Activated B cell treated with CpG ODN at 0.5 μM for 24 hours (primary cell): ENCODE measurements at regions of chrX and their contacts with region 1.

Region 1: DNA sequence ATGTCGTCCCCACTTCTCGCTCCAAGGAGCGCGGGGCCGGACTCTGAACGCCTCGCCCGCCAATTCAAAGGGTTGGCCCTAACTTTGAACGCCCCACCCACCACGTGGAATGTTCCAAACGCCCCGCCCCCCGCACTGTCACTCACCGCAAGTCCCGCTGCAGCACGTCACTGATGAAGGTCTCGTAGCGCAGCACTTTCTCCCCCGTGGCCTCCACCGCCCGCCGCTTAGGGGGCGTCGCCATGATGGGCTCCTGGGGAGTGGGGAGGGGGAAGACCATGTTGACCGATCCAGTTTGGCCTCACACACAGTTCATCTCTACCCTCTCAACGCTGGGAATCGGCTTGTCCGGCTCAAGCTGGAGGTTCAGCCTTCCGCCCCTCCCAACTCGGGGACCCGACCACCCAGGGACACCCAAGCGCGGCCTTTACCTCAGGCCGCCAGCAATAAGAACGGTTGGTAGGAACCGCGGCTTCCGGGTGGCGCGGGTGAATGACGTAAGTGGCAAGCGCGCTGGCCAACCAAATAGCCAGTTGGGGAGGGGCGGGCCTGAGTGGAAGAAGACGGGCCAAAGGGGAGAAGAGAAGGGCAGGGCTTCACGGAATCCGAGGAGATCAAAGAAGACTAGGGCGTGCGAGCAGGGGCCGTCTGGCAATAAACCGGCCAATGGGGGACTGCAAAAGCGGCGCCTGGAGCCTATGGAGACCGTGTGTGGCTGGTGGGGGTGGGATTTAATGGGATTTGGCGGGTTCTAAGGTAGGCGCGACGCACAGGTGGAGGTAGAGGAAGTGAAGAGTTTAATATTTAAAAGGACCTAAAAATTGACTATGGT is at the start of gene UXT:
- DNase-seq: peak; percentile 82
- ATAC-seq: peak; percentile 85
- H3K4me3 Mint-ChIP-seq: peak within 1 kb of the TSS; percentile 91
- H3K27ac Mint-ChIP-seq: peak within 1 kb of the TSS; percentile 99
- H3K4me1 Mint-ChIP-seq: peaks cover 18% of the 10 kb centered on the region
- H3K27me3 Mint-ChIP-seq: no peaks in the 10 kb centered on the region
- CTCF ChIP-seq: no peak
- total RNA-seq, gene UXT: 184 and 201 TPM in 2 replicates

Region 2: GRCh38 chrX:46446727-46447378 is 1212.0 kb before region 1 on chrX:
- CTCF ChIA-PET with region 1: no interaction called
- POLR2A ChIA-PET with region 1: no interaction called
- intact Hi-C with region 1: loop called (anchors 5 kb)
- DNase-seq: peak; percentile 81
- ATAC-seq: peak; percentile 98
- H3K4me3 Mint-ChIP-seq: peak overlapping the region; percentile 85
- H3K27ac Mint-ChIP-seq: peak overlapping the region; percentile 85
- H3K4me1 Mint-ChIP-seq: peaks cover 11% of the 10 kb centered on the region
- H3K27me3 Mint-ChIP-seq: no peaks in the 10 kb centered on the region
- CTCF ChIP-seq: no peak

Region 3: GRCh38 chrX:47619486-47620302 is 39.2 kb before region 1 on chrX and contains the start of gene SYN1:
- CTCF ChIA-PET with region 1: no interaction called
- POLR2A ChIA-PET with region 1: no interaction called
- intact Hi-C with region 1: loop called (anchors 2 kb)
- DNase-seq: peak; percentile 62
- ATAC-seq: peak; percentile 93
- H3K4me3 Mint-ChIP-seq: peak within 1 kb of the TSS; percentile 53
- H3K27ac Mint-ChIP-seq: no peak within 1 kb of the TSS
- H3K4me1 Mint-ChIP-seq: peaks cover 16% of the 10 kb centered on the region
- H3K27me3 Mint-ChIP-seq: peaks cover 45% of the 10 kb centered on the region
- CTCF ChIP-seq: no peak
- total RNA-seq, gene SYN1: not detected in 2 replicates

Region 4: GRCh38 chrX:47697191-47697590 is 38.3 kb after region 1 on chrX:
- CTCF ChIA-PET with region 1: no interaction called
- POLR2A ChIA-PET with region 1: no interaction called
- intact Hi-C with region 1: no loop called
- DNase-seq: no peak
- ATAC-seq: no peak
- H3K4me3 Mint-ChIP-seq: no peak overlapping the region
- H3K27ac Mint-ChIP-seq: no peak overlapping the region
- H3K4me1 Mint-ChIP-seq: no peaks in the 10 kb centered on the region
- H3K27me3 Mint-ChIP-seq: peaks cover 6% of the 10 kb centered on the region
- CTCF ChIP-seq: no peak

Region 5: GRCh38 chrX:48508400-48509244 is 849.7 kb after region 1 on chrX and contains the start of gene PORCN:
- CTCF ChIA-PET with region 1: no interaction called
- POLR2A ChIA-PET with region 1: no interaction called
- intact Hi-C with region 1: loop called (anchors 1 kb)
- DNase-seq: peak; percentile 65
- ATAC-seq: peak; percentile 88
- H3K4me3 Mint-ChIP-seq: peak within 1 kb of the TSS; percentile 91
- H3K27ac Mint-ChIP-seq: peak within 1 kb of the TSS; percentile 91
- H3K4me1 Mint-ChIP-seq: peaks cover 11% of the 10 kb centered on the region
- H3K27me3 Mint-ChIP-seq: no peaks in the 10 kb centered on the region
- CTCF ChIP-seq: no peak
- total RNA-seq, gene PORCN: 7.8 and 9.8 TPM in 2 replicates

Region 6: GRCh38 chrX:48597353-48598264 is 938.7 kb after region 1 on chrX and contains the start of gene WDR13:
- CTCF ChIA-PET with region 1: no interaction called
- POLR2A ChIA-PET with region 1: no interaction called
- intact Hi-C with region 1: loop called (anchors 2 kb)
- DNase-seq: peak; percentile 79
- ATAC-seq: peak; percentile 83
- H3K4me3 Mint-ChIP-seq: peak within 1 kb of the TSS; percentile 97
- H3K27ac Mint-ChIP-seq: peak within 1 kb of the TSS; percentile 99
- H3K4me1 Mint-ChIP-seq: peaks cover 7% of the 10 kb centered on the region
- H3K27me3 Mint-ChIP-seq: no peaks in the 10 kb centered on the region
- CTCF ChIP-seq: no peak
- total RNA-seq, gene WDR13: 73.4 and 75.8 TPM in 2 replicates